ENCODE measurements at regions of chr7 and their contacts with region 1.

Region 1: DNA sequence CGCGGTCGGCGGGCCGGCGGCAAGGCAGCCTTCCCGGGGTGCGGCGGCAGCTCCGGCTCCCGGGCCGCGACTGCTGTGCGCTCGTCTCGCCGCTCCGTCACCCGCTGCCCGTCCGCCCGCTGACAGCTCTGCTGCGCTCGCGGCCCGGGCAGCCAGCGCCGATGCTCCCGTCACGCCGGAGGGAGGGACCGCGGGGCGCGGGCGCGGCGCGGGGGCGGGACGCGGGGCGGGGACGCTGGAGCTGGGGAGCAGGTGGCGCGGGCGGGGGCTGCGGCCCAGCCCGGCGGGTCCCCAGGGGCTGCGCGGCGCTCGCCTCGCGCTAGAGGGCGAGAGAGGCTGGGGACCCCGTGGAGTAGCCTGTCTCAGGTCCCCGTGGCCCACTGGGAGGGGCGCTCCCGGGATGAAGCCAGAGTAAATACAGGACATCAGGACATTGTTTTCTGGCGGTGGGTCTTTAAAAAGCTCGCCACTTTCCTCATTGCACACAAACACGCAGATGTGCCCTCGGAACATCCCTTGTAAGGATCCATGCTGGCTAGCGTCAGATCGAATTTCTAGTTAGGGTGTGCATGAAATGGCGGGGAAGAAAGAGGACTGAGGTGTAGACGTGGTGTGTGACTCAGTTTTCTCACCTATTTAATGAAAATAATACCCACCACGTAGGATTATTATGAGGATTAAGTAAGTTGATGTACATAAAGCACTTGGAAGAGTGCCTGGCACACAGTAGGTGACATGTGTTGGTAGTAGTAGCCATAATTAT is at the start of gene ELAPOR2:
- DNase-seq: peak; percentile 74 to 93
- ATAC-seq: peak; percentile 95
- H3K4me3 ChIP-seq: peak within 1 kb of the TSS; percentile 82 to 91
- H3K27ac ChIP-seq: no peak within 1 kb of the TSS
- H3K4me1 ChIP-seq: no peaks in the 10 kb centered on the region
- H3K27me3 ChIP-seq: no peaks in the 10 kb centered on the region
- total RNA-seq, gene ELAPOR2: 17.9 to 23.7 TPM

Region 2: DNA sequence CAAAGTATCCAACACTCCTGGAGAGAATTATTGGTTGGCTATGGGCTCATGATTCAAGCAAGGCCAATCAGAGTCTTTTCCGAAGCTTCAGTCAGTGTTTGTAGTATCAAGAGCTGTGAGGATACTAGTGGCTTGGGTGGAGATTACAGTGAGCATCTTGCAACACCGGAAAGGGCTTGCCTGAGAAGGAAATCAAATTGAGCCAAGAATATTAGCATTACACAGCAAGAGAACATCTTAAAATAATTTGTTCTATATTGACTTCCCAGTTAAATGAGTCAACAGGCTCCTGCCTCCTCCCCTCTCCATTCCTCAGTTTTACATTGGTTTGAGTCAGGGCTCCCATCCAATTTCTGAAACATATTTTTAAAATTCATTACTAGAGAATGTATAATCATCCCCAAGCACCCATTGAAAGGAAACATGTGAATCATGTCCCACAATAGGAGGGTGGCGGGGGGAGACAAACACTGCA is 127.6 kb before region 1 on chr7:
- intact Hi-C with region 1: loop called in 1 of 2 experiments (anchors 5 kb)
- DNase-seq: peak in 1 of 2 donors; percentile 33
- ATAC-seq: peak; percentile 76
- H3K4me3 ChIP-seq: no peak overlapping the region
- H3K27ac ChIP-seq: no peak overlapping the region
- H3K4me1 ChIP-seq: peaks cover 0 to 3% of the 10 kb centered on the region in 2 donors
- H3K27me3 ChIP-seq: no peaks in the 10 kb centered on the region

Region 3: GRCh38 chr7:87188930-87189329 is 129.2 kb after region 1 on chr7:
- intact Hi-C with region 1: no loop called
- DNase-seq: no peak
- ATAC-seq: no peak
- H3K4me3 ChIP-seq: no peak overlapping the region
- H3K27ac ChIP-seq: no peak overlapping the region
- H3K4me1 ChIP-seq: no peaks in the 10 kb centered on the region
- H3K27me3 ChIP-seq: no peaks in the 10 kb centered on the region

Region 4: DNA sequence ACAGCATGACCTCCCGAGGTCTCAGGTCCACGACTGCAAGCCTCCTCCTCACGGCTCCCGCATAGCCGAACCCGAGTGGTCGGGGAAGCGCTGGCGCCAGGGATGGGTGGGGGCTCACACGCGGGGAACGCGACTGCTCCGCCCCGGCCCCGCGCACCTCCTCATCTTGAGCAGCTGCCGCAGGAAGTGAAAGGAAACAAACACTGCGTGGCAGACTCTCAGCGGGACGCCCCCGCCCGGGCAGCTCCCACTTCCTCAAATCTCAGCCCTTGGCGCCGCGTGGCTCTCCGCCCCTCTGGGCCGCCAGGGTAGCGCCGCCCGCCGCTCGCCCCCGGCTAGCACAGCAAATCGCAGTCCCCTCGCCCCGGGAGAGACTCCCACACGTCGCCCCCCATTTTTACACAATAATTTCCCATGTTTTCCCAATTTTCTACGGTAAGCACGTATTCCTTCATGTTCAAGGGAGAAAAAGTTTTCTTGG is 159.9 kb after region 1 on chr7 and contains the start of gene TMEM243:
- intact Hi-C with region 1: loop called (anchors 10 kb)
- DNase-seq: peak; percentile 92
- ATAC-seq: peak; percentile 93
- H3K4me3 ChIP-seq: peak within 1 kb of the TSS; percentile 80 to 96
- H3K27ac ChIP-seq: peak within 1 kb of the TSS; percentile 23 to 72
- H3K4me1 ChIP-seq: peaks cover 0 to 7% of the 10 kb centered on the region in 2 donors
- H3K27me3 ChIP-seq: no peaks in the 10 kb centered on the region
- total RNA-seq, gene TMEM243: 25.3 to 37.7 TPM

Measured in aorta (tissue), 5 donors.